Mammary epithelial cell (primary cell): ENCODE measurements at regions of chr12 and their contacts with region 1.

Region 1: GRCh38 chr12:90377241-90377640 is 577.7 kb downstream of the CCER1 start:
- DNase-seq: no peak
- H3K4me3 ChIP-seq: no peak overlapping the region
- H3K27ac ChIP-seq: no peak overlapping the region
- H3K4me1 ChIP-seq: no peaks in the 10 kb centered on the region
- H3K27me3 ChIP-seq: no peaks in the 10 kb centered on the region
- CTCF ChIP-seq: no peak

Region 2: GRCh38 chr12:90423965-90424364 is 46.7 kb after region 1 on chr12:
- CTCF ChIA-PET with region 1: no interaction called
- dilution Hi-C with region 1: no loop called
- in situ Hi-C with region 1: no loop called
- intact Hi-C with region 1: no loop called
- DNase-seq: no peak
- H3K4me3 ChIP-seq: no peak overlapping the region
- H3K27ac ChIP-seq: no peak overlapping the region
- H3K4me1 ChIP-seq: no peaks in the 10 kb centered on the region
- H3K27me3 ChIP-seq: peaks cover 4% of the 10 kb centered on the region
- CTCF ChIP-seq: no peak

Region 3: GRCh38 chr12:90611048-90611447 is 233.8 kb after region 1 on chr12:
- CTCF ChIA-PET with region 1: no interaction called
- dilution Hi-C with region 1: no loop called
- in situ Hi-C with region 1: no loop called
- intact Hi-C with region 1: loop called (anchors 10 kb)
- DNase-seq: no peak
- H3K4me3 ChIP-seq: no peak overlapping the region
- H3K27ac ChIP-seq: no peak overlapping the region
- H3K4me1 ChIP-seq: no peaks in the 10 kb centered on the region
- H3K27me3 ChIP-seq: no peaks in the 10 kb centered on the region
- CTCF ChIP-seq: no peak